Activated naive CD4-positive, alpha-beta T cell treated with anti-CD3 and anti-CD28 coated beads, Interleukin-2, amount 10 ng/mL, durations not matched to agents 7 days and 5 days (primary cell): ENCODE measurements at regions of chr9 and their contacts with region 1.

Region 1: DNA sequence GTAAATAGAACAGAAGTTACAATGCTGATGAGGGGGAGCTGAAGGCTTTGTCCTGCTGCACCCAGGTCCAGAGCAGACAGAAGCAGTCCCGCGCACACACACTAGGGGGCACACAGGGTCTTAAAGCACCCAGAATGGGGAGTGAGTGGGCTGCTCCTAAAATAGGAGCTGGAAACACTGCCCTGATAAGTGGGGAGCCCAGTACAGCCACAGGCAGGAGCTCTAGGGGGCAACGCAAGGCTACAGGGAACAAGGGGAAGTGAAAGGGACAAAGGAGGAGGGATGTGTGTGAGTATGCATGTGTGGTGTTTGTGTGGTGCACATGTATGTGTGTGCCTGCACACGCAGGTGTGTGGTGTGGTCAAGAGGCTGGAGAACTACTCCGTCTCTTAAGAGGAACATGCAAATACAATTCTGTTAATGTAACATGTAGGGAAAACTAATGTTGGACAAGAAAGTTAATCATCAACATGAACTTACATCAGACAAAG is 191.5 kb downstream of the ROR2 start:
- DNase-seq: peak; percentile 53
- H3K4me3 Mint-ChIP-seq: no peak overlapping the region
- H3K27ac Mint-ChIP-seq: no peak overlapping the region
- H3K4me1 Mint-ChIP-seq: no peaks in the 10 kb centered on the region
- H3K27me3 Mint-ChIP-seq: peaks cover 12% of the 10 kb centered on the region

Region 2: GRCh38 chr9:91775011-91775707 is 16.6 kb after region 1 on chr9:
- CTCF ChIA-PET with region 1: interaction called, 11 read pairs
- DNase-seq: peak; percentile 77
- H3K4me3 Mint-ChIP-seq: no peak overlapping the region
- H3K27ac Mint-ChIP-seq: no peak overlapping the region
- H3K4me1 Mint-ChIP-seq: no peaks in the 10 kb centered on the region
- H3K27me3 Mint-ChIP-seq: peaks cover 19% of the 10 kb centered on the region

Region 3: GRCh38 chr9:92342825-92343488 is 584.4 kb after region 1 on chr9:
- CTCF ChIA-PET with region 1: no interaction called
- DNase-seq: no peak
- H3K4me3 Mint-ChIP-seq: no peak overlapping the region
- H3K27ac Mint-ChIP-seq: no peak overlapping the region
- H3K4me1 Mint-ChIP-seq: no peaks in the 10 kb centered on the region
- H3K27me3 Mint-ChIP-seq: no peaks in the 10 kb centered on the region